CD4-positive, alpha-beta memory T cell (primary cell): ENCODE measurements at regions of chr2 and their contacts with region 1.

Region 1: GRCh38 chr2:38720613-38721241 is 30.4 kb downstream of the SRSF7 start:
- DNase-seq: no peak
- H3K4me3 ChIP-seq: no peak overlapping the region
- H3K4me3 Mint-ChIP-seq: peak overlapping the region in 5 of 8 donors; percentile 22 to 44 (median 29)
- H3K27ac ChIP-seq: no peak overlapping the region
- H3K27ac Mint-ChIP-seq: peak overlapping the region; percentile 75 to 94 (median 89)
- H3K4me1 ChIP-seq: peaks cover 58% of the 10 kb centered on the region
- H3K4me1 Mint-ChIP-seq: peaks cover 39 to 68% (median 54%) of the 10 kb centered on the region in 4 donors
- H3K27me3 ChIP-seq: no peaks in the 10 kb centered on the region
- H3K27me3 Mint-ChIP-seq: no peaks in the 10 kb centered on the region

Region 2: GRCh38 chr2:38535744-38536506 is 184.8 kb before region 1 on chr2:
- CTCF ChIA-PET with region 1: interaction called, 12 read pairs
- POLR2A ChIA-PET with region 1: no interaction called
- intact Hi-C with region 1: no loop called
- DNase-seq: peak; percentile 60 to 77 (median 70)
- H3K4me3 ChIP-seq: peak overlapping the region; percentile 47 to 52
- H3K4me3 Mint-ChIP-seq: peak overlapping the region; percentile 25 to 77 (median 52)
- H3K27ac ChIP-seq: no peak overlapping the region
- H3K27ac Mint-ChIP-seq: peak overlapping the region in 1 of 7 donors; percentile 36
- H3K4me1 ChIP-seq: peaks cover 9% of the 10 kb centered on the region
- H3K4me1 Mint-ChIP-seq: peaks cover 0 to 6% (median 2%) of the 10 kb centered on the region in 4 donors
- H3K27me3 ChIP-seq: no peaks in the 10 kb centered on the region
- H3K27me3 Mint-ChIP-seq: peaks cover 0 to 2% of the 10 kb centered on the region in 2 donors

Region 3: GRCh38 chr2:38596229-38596628 is 124.5 kb before region 1 on chr2:
- CTCF ChIA-PET with region 1: interaction called, 11 read pairs
- POLR2A ChIA-PET with region 1: interaction called, 30 read pairs
- intact Hi-C with region 1: no loop called
- DNase-seq: peak in 2 of 5 donors; percentile 11 to 42
- H3K4me3 ChIP-seq: peak overlapping the region; percentile 19 to 40
- H3K4me3 Mint-ChIP-seq: peak overlapping the region; percentile 73 to 98 (median 97)
- H3K27ac ChIP-seq: peak overlapping the region; percentile 13
- H3K27ac Mint-ChIP-seq: peak overlapping the region; percentile 81 to 97 (median 92)
- H3K4me1 ChIP-seq: peaks cover 78% of the 10 kb centered on the region
- H3K4me1 Mint-ChIP-seq: peaks cover 38 to 72% (median 55%) of the 10 kb centered on the region in 4 donors
- H3K27me3 ChIP-seq: no peaks in the 10 kb centered on the region
- H3K27me3 Mint-ChIP-seq: no peaks in the 10 kb centered on the region

Region 4: GRCh38 chr2:38672445-38673391 is 48.0 kb before region 1 on chr2:
- CTCF ChIA-PET with region 1: interaction called, 11 read pairs
- POLR2A ChIA-PET with region 1: interaction called, 11 read pairs
- intact Hi-C with region 1: no loop called
- DNase-seq: no peak
- H3K4me3 ChIP-seq: no peak overlapping the region
- H3K4me3 Mint-ChIP-seq: peak overlapping the region in 6 of 8 donors; percentile 4 to 73 (median 28)
- H3K27ac ChIP-seq: no peak overlapping the region
- H3K27ac Mint-ChIP-seq: peak overlapping the region; percentile 57 to 93 (median 87)
- H3K4me1 ChIP-seq: peaks cover 87% of the 10 kb centered on the region
- H3K4me1 Mint-ChIP-seq: peaks cover 47 to 86% (median 67%) of the 10 kb centered on the region in 4 donors
- H3K27me3 ChIP-seq: no peaks in the 10 kb centered on the region
- H3K27me3 Mint-ChIP-seq: no peaks in the 10 kb centered on the region

Region 5: GRCh38 chr2:38690499-38691294 is 30.0 kb before region 1 on chr2:
- CTCF ChIA-PET with region 1: interaction called, 125 read pairs
- POLR2A ChIA-PET with region 1: interaction called, 6 read pairs
- intact Hi-C with region 1: no loop called
- DNase-seq: no peak
- H3K4me3 ChIP-seq: no peak overlapping the region
- H3K4me3 Mint-ChIP-seq: peak overlapping the region in 6 of 8 donors; percentile 46 to 68 (median 60)
- H3K27ac ChIP-seq: no peak overlapping the region
- H3K27ac Mint-ChIP-seq: peak overlapping the region; percentile 44 to 89 (median 82)
- H3K4me1 ChIP-seq: peaks cover 69% of the 10 kb centered on the region
- H3K4me1 Mint-ChIP-seq: peaks cover 44 to 76% (median 59%) of the 10 kb centered on the region in 4 donors
- H3K27me3 ChIP-seq: no peaks in the 10 kb centered on the region
- H3K27me3 Mint-ChIP-seq: no peaks in the 10 kb centered on the region

Region 6: GRCh38 chr2:38702413-38702812 is 18.3 kb before region 1 on chr2:
- CTCF ChIA-PET with region 1: interaction called, 13 read pairs
- POLR2A ChIA-PET with region 1: interaction called, 34 read pairs
- intact Hi-C with region 1: no loop called
- DNase-seq: no peak
- H3K4me3 ChIP-seq: no peak overlapping the region
- H3K4me3 Mint-ChIP-seq: peak overlapping the region in 6 of 8 donors; percentile 51 to 71 (median 64)
- H3K27ac ChIP-seq: peak overlapping the region; percentile 41
- H3K27ac Mint-ChIP-seq: peak overlapping the region; percentile 84 to 97 (median 94)
- H3K4me1 ChIP-seq: peaks cover 88% of the 10 kb centered on the region
- H3K4me1 Mint-ChIP-seq: peaks cover 45 to 77% (median 62%) of the 10 kb centered on the region in 4 donors
- H3K27me3 ChIP-seq: no peaks in the 10 kb centered on the region
- H3K27me3 Mint-ChIP-seq: no peaks in the 10 kb centered on the region

Region 7: GRCh38 chr2:38709567-38710194 is 11.0 kb before region 1 on chr2:
- CTCF ChIA-PET with region 1: interaction called, 13 read pairs
- POLR2A ChIA-PET with region 1: interaction called, 34 read pairs
- intact Hi-C with region 1: loop called (anchors 1 kb)
- DNase-seq: peak; percentile 81 to 87 (median 84)
- H3K4me3 ChIP-seq: peak overlapping the region in 1 of 2 donors; percentile 13
- H3K4me3 Mint-ChIP-seq: peak overlapping the region; percentile 33 to 90 (median 80)
- H3K27ac ChIP-seq: peak overlapping the region; percentile 46
- H3K27ac Mint-ChIP-seq: peak overlapping the region; percentile 92 to 98 (median 96)
- H3K4me1 ChIP-seq: peaks cover 84% of the 10 kb centered on the region
- H3K4me1 Mint-ChIP-seq: peaks cover 58 to 88% (median 74%) of the 10 kb centered on the region in 4 donors
- H3K27me3 ChIP-seq: no peaks in the 10 kb centered on the region
- H3K27me3 Mint-ChIP-seq: no peaks in the 10 kb centered on the region

Region 8: DNA sequence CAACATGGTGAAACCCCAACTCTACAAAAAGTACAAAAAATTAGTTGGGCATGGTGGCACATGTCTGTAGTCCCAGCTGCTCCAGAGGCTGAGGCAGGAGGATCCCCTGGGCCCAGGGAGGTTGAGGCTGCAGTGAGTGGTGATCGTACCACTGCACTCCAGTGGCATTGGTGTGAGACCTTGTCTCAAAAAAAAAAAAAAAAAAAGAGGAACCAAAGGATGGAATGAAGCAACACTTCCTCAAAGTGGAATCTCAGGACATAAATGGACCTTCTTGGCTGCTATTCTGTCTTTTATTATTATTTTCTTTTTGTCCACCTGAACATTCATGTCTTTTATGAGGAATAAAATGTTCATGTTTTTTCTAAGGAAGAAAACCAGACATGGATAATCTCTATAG is 71.0 kb after region 1 on chr2:
- CTCF ChIA-PET with region 1: no interaction called
- POLR2A ChIA-PET with region 1: no interaction called
- intact Hi-C with region 1: no loop called
- DNase-seq: no peak
- H3K4me3 ChIP-seq: no peak overlapping the region
- H3K4me3 Mint-ChIP-seq: no peak overlapping the region
- H3K27ac ChIP-seq: no peak overlapping the region
- H3K27ac Mint-ChIP-seq: no peak overlapping the region
- H3K4me1 ChIP-seq: no peaks in the 10 kb centered on the region
- H3K4me1 Mint-ChIP-seq: no peaks in the 10 kb centered on the region
- H3K27me3 ChIP-seq: no peaks in the 10 kb centered on the region
- H3K27me3 Mint-ChIP-seq: no peaks in the 10 kb centered on the region

Region 9: GRCh38 chr2:38829971-38830370 is 109.2 kb after region 1 on chr2:
- CTCF ChIA-PET with region 1: no interaction called
- POLR2A ChIA-PET with region 1: no interaction called
- intact Hi-C with region 1: no loop called
- DNase-seq: no peak
- H3K4me3 ChIP-seq: no peak overlapping the region
- H3K4me3 Mint-ChIP-seq: no peak overlapping the region
- H3K27ac ChIP-seq: no peak overlapping the region
- H3K27ac Mint-ChIP-seq: no peak overlapping the region
- H3K4me1 ChIP-seq: no peaks in the 10 kb centered on the region
- H3K4me1 Mint-ChIP-seq: no peaks in the 10 kb centered on the region
- H3K27me3 ChIP-seq: no peaks in the 10 kb centered on the region
- H3K27me3 Mint-ChIP-seq: no peaks in the 10 kb centered on the region